ENCODE measurements at regions of chr17 and their contacts with region 1.

Region 1: DNA sequence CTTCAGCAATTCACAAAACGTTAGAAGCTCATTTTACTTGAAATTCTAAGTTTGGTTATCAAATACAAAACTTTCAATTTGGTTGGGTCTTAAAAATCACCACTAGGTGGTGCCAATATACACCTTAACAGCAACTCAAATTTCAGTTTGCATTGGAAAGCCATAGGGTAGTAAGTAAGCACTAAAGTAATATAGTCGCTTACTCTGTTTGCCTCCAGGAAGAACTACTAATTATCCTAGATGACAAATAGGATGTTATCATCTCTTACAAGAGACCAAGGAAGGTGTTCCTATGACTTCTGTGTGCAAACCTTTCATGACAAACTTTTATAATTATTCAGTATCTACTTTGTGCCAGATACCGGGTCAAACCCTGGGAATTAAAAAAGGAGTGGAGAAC is 93.3 kb downstream of the MYO1D start:
- DNase-seq: no peak
- ATAC-seq: 0 out of 2 replicates have a peak, but pooled peaks have one; percentile 32
- H3K4me3 Mint-ChIP-seq: no peak overlapping the region
- H3K27ac Mint-ChIP-seq: no peak overlapping the region
- H3K4me1 Mint-ChIP-seq: peaks cover 6% of the 10 kb centered on the region
- H3K27me3 Mint-ChIP-seq: no peaks in the 10 kb centered on the region
- CTCF ChIP-seq: peak; percentile 64

Region 2: GRCh38 chr17:32755045-32755805 is 28.4 kb before region 1 on chr17:
- CTCF ChIA-PET with region 1: no interaction called
- POLR2A ChIA-PET with region 1: no interaction called
- DNase-seq: no peak
- ATAC-seq: peak; percentile 36; the same call in 1 of the 2 replicates
- H3K4me3 Mint-ChIP-seq: no peak overlapping the region
- H3K27ac Mint-ChIP-seq: no peak overlapping the region
- H3K4me1 Mint-ChIP-seq: peaks cover 5% of the 10 kb centered on the region
- H3K27me3 Mint-ChIP-seq: no peaks in the 10 kb centered on the region
- CTCF ChIP-seq: no peak

Region 3: GRCh38 chr17:32794533-32795246 is 11.1 kb after region 1 on chr17:
- CTCF ChIA-PET with region 1: interaction called, 14 read pairs
- POLR2A ChIA-PET with region 1: no interaction called
- DNase-seq: no peak
- ATAC-seq: peak; percentile 71
- H3K4me3 Mint-ChIP-seq: no peak overlapping the region
- H3K27ac Mint-ChIP-seq: no peak overlapping the region
- H3K4me1 Mint-ChIP-seq: peaks cover 18% of the 10 kb centered on the region
- H3K27me3 Mint-ChIP-seq: no peaks in the 10 kb centered on the region
- CTCF ChIP-seq: no peak

Region 4: DNA sequence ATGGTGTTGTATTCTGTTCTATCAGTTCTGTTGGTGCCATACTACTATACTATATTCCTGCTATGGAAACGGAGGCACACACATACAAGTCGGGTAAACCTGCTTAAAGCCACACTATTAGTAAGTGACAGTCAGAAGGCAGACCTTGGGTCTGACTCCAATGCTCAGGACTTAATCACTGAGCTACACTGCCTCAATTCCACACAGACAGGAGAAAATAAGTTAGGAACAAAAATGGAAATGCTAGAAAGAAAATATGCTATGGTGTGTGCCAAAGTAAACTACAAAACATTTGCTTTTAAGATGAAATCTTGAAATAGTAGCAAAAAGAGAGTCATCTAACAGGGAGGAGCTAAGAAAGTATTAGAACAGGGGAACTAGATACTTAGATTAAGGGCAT is 45.2 kb after region 1 on chr17:
- CTCF ChIA-PET with region 1: interaction called, 10 read pairs
- POLR2A ChIA-PET with region 1: interaction called, 4 read pairs
- DNase-seq: no peak
- ATAC-seq: no peak
- H3K4me3 Mint-ChIP-seq: no peak overlapping the region
- H3K27ac Mint-ChIP-seq: no peak overlapping the region
- H3K4me1 Mint-ChIP-seq: 0 out of 2 replicates have a peak, but pooled peaks cover 3% of the 10 kb centered on the region
- H3K27me3 Mint-ChIP-seq: no peaks in the 10 kb centered on the region
- CTCF ChIP-seq: no peak

Region 5: GRCh38 chr17:32909787-32910369 is 126.3 kb after region 1 on chr17:
- CTCF ChIA-PET with region 1: interaction called, 44 read pairs
- POLR2A ChIA-PET with region 1: no interaction called
- DNase-seq: peak; percentile 79
- ATAC-seq: peak; percentile 87
- H3K4me3 Mint-ChIP-seq: no peak overlapping the region
- H3K27ac Mint-ChIP-seq: no peak overlapping the region
- H3K4me1 Mint-ChIP-seq: peaks cover 18% of the 10 kb centered on the region
- H3K27me3 Mint-ChIP-seq: no peaks in the 10 kb centered on the region; the same call in 1 of the 2 replicates
- CTCF ChIP-seq: peak; percentile 67; the same call in 1 of the 2 replicates

Region 6: GRCh38 chr17:32936894-32937500 is 153.4 kb after region 1 on chr17:
- CTCF ChIA-PET with region 1: interaction called, 40 read pairs
- POLR2A ChIA-PET with region 1: interaction called, 3 read pairs
- DNase-seq: peak; percentile 92
- ATAC-seq: peak; percentile 95
- H3K4me3 Mint-ChIP-seq: no peak overlapping the region
- H3K27ac Mint-ChIP-seq: peak overlapping the region; percentile 93
- H3K4me1 Mint-ChIP-seq: peaks cover 22% of the 10 kb centered on the region
- H3K27me3 Mint-ChIP-seq: no peaks in the 10 kb centered on the region
- CTCF ChIP-seq: peak; percentile 85

Region 7: DNA sequence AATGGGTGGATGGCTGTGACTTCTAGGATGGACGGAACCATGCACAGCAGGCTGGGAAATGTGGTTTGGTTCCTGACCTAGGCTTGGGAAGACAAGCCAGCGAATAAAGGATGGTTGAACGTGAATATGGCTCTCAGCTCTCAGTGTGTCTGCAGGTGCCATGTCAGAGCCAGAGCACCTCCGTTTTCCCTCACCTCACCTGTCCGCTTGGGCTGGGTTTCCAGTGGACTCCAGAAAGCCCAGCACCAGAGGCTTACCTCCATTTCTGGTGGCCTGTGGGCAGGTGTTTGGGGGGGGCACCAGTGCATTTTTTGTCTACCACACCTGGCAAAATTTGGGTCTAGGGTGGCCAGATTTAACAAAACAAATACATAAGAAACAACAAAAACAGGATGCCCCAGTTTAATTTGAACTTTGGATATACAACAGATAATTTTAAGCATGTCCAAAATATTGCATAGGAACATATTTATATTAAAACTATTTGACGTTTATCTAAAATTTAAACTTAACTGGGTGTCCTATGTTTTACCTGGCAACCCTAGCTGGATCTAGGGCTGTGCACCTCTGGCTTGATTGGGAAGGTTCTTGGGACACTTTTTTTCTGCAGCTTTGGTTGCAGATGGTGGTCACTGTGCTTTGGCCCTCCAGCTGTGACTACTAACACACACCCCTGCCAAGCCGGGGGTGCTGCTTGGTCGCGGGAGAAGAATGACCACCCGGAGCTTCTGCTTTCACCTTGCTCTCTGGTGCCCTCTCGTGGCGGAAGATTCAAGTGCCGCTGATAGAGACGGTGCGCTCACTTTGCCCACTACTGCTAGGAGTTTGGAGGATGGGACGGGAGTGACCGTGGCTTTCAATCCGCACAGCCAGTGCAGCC is 214.4 kb after region 1 on chr17:
- CTCF ChIA-PET with region 1: interaction called, 16 read pairs
- POLR2A ChIA-PET with region 1: no interaction called
- DNase-seq: peak; percentile 92
- ATAC-seq: peak; percentile 96
- H3K4me3 Mint-ChIP-seq: peak overlapping the region; percentile 47
- H3K27ac Mint-ChIP-seq: no peak overlapping the region
- H3K4me1 Mint-ChIP-seq: no peaks in the 10 kb centered on the region; the same call in none of the 2 replicates
- H3K27me3 Mint-ChIP-seq: peaks cover 15% of the 10 kb centered on the region
- CTCF ChIP-seq: peak; percentile 86

Measured in WTC11 (cell line).